Activated naive CD4-positive, alpha-beta T cell treated with anti-CD3 and anti-CD28 coated beads for 36 hours (primary cell): ENCODE measurements at regions of chr17 and their contacts with region 1.

Region 1: DNA sequence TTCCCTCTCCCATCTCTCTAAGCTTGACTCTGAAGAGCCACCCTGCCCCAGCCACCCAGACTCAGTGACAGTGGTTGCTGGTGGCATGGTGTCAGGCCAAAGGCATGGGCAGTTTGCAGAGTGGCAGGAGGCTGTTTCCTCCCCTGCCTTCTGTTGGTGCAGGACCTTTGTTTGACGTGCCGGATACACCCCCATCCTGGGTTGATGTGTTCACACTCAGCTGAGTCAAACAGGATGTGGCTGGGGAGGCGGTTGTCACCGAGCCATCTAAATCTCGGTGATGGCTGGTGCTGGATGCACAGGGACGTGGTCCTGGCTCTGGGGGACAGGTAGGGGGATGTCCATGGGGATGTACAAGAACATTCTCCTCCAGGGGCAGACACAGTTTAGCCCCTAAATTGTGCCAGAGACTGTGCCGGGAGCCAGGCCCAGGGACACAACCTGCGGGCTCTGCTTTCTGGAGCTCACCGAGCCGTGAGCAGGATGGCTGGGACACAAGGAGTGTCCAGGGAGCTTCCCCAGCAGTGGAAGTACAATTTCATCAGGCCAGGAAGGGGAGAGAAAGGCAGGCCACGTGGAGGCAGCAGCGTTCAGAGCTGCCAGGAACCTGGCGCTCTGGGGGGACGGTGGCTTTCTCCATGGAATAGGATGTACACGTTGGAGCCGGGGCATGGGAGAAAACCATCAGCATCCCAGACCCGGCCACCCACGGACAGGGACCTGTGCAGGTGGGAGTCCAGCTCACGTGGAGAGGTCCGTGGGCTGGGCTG is 264.2 kb downstream of the SEC14L1 start:
- DNase-seq: peak; percentile 95
- H3K4me3 Mint-ChIP-seq: peak overlapping the region; percentile 79
- H3K27ac Mint-ChIP-seq: peak overlapping the region; percentile 90
- H3K4me1 Mint-ChIP-seq: peaks cover 92% of the 10 kb centered on the region
- H3K27me3 Mint-ChIP-seq: no peaks in the 10 kb centered on the region

Region 2: GRCh38 chr17:77345260-77345910 is 59.6 kb before region 1 on chr17:
- CTCF ChIA-PET with region 1: interaction called, 12 read pairs
- intact Hi-C with region 1: no loop called
- DNase-seq: no peak
- H3K4me3 Mint-ChIP-seq: no peak overlapping the region
- H3K27ac Mint-ChIP-seq: no peak overlapping the region
- H3K4me1 Mint-ChIP-seq: peaks cover 41% of the 10 kb centered on the region
- H3K27me3 Mint-ChIP-seq: no peaks in the 10 kb centered on the region

Region 3: GRCh38 chr17:77420804-77421629 is 16.0 kb after region 1 on chr17:
- CTCF ChIA-PET with region 1: interaction called, 20 read pairs
- intact Hi-C with region 1: loop called (anchors 2 kb)
- DNase-seq: peak; percentile 75
- H3K4me3 Mint-ChIP-seq: peak overlapping the region; percentile 66
- H3K27ac Mint-ChIP-seq: peak overlapping the region; percentile 86
- H3K4me1 Mint-ChIP-seq: peaks cover 52% of the 10 kb centered on the region
- H3K27me3 Mint-ChIP-seq: no peaks in the 10 kb centered on the region

Region 4: DNA sequence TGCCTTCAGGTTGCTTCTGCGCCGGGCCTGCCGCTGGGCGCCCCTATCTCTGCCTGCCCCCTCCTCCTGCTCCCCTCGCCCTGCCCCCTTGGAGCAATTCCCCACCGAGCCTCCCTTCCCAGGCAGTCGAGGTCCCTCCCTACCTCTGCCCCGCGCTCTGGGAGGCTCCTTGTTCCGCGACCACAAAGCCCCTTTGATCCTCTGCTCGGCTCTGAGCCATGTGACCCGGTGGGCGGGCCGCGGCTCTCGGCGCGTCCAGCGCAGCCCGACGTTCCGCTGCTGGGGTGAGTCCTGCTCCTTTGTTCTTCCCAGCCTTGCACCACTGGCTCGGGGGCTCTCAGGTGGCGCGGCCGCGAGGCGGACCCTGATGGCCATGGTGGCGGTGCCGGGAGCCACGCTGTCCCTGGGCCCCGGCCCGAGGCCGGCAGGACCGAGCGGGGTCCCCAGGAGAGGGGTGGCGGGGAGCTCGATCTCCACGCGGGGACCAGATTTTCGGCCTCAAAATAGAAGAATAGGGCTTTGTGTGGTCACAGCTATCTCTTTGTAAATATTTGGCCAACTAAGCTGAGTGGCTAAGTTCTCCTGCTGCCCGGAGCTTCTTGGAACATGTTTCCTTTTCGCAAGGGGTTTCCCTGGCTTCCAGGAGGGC is 46.4 kb after region 1 on chr17:
- CTCF ChIA-PET with region 1: interaction called, 12 read pairs
- intact Hi-C with region 1: no loop called
- DNase-seq: peak; percentile 83
- H3K4me3 Mint-ChIP-seq: peak overlapping the region; percentile 86
- H3K27ac Mint-ChIP-seq: peak overlapping the region; percentile 100
- H3K4me1 Mint-ChIP-seq: peaks cover 42% of the 10 kb centered on the region
- H3K27me3 Mint-ChIP-seq: no peaks in the 10 kb centered on the region

Region 5: DNA sequence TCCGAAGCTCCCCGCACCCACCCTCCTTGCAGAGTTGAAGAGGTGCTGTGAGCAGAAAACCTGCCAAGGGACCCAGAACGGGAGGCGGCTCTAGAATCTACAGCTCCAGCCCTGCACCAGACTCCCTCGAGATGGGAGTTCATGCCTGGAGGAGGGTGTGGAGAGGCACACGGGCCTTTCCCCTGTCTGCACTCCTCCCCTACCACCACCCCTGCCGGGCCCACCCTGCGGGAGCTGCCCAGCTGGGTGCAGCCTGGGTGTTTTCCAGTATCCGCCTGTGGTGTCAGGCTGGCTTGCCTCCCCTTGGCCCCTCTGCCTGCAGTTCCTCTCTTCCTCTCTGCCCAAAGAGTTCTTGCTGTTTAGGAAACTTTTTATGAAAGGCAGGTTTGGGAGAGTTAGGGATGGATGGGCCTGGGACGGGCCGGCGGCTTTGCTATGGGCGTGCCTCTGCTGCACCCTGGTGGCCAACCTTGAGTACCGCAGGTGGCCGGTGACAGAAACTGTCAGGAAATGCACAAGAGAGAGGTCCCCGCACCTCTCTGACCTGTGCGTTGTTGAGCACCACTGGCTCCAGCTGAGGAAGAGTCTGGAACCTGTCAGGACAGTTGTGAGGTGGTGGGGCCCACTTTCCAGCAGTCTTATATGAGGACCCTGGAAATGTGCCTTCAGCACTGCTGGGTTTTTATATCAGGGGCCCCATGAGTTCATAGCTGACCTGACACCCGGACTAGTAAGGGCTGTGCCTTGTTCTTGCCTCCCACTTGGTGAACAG is 89.9 kb after region 1 on chr17:
- CTCF ChIA-PET with region 1: interaction called, 36 read pairs
- intact Hi-C with region 1: loop called (anchors 1 kb)
- DNase-seq: peak; percentile 81
- H3K4me3 Mint-ChIP-seq: no peak overlapping the region
- H3K27ac Mint-ChIP-seq: peak overlapping the region; percentile 77
- H3K4me1 Mint-ChIP-seq: peaks cover 11% of the 10 kb centered on the region
- H3K27me3 Mint-ChIP-seq: no peaks in the 10 kb centered on the region